Endothelial cell of umbilical vein (primary cell): ENCODE measurements at regions of chr19 and their contacts with region 1.

Region 1: DNA sequence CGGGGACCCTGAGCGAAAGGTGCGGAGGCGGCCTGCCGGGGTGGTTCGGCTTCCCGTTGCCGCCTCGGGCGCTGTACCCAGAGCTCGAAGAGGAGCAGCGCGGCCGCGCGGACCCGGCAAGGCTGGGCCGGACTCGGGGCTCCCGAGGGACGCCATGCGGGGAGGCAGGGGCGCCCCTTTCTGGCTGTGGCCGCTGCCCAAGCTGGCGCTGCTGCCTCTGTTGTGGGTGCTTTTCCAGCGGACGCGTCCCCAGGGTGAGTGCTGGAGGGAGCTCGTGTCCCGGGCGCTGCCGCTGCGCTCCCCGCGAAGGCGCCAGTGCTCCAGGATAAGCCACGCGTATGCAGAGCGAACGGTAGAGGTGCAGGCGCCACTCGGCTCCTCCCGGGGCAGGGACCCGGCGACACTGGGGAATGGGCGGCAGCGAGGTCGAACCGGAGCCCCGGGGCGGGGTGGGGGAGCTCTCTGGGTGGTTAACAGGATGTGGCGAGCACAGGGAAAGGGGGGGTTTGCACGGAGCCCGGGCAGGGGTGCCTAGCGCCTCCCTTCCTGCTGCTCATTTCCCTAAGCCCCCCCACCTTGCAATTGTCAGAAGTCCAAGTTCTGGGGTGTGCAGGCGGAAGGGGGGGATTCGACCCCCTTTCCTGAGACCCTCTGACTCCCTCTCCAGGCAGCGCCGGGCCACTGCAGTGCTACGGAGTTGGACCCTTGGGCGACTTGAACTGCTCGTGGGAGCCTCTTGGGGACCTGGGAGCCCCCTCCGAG is at the start of gene IL27RA:
- DNase-seq: peak; percentile 40
- H3K4me3 ChIP-seq: peak within 1 kb of the TSS; percentile 58 to 67 (median 61)
- H3K27ac ChIP-seq: no peak within 1 kb of the TSS
- H3K4me1 ChIP-seq: peaks cover 6% of the 10 kb centered on the region
- H3K27me3 ChIP-seq: peaks cover 0 to 7% of the 10 kb centered on the region in 2 experiments
- CTCF ChIP-seq: peak; percentile 48 to 77
- POLR2A ChIP-seq: no peak
- total RNA-seq, gene IL27RA: 3.7 and 4.5 TPM in 2 replicates

Region 2: DNA sequence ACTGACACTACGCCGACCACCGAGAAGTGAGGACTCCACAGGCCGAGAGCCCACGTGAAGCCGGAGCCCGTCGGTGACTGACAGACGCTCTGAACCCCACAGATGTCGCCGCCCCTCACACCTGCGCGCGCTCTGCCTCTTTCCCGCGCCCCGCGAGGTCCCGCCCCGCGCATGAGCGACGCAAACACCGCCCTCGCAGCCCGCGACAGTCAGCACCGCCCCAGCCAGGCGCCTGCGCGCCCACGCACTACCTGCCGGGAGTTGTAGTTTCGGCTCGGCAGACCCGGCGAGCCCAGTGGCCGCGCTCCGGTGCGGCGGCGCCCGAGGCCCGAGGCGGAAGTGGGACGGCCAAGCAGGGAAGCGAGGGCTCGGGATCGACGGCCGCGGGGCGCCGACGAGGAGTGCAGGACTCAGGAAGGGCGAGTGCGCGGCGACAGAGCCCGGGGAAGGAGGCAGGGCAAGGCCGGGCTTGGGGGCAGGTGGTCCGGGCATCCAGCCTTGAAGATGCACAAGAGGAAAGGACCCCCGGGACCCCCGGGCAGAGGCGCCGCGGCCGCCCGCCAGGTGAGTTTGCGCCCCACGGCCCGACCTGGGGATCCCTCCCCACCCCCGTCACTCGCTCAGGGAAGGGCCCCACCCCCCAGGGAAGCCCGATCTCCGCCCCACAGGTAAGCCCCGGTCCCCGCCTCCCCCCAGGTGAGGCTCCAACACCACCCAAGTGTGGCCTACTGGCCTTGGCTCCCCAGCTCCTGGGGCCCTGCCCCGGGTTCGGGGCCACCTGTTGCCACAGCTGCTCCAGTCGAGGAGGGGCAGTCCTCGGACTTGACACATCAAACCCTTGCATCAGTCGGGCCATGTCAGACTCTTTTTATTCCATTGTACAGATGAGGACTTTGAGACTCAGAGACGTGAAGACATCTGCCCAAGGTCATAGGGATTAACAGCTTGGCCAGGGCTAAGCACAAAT is 125.7 kb before region 1 on chr19 and contains the starts of genes BRME1 and CC2D1A:
- CTCF ChIA-PET with region 1: interaction called, 6 read pairs
- POLR2A ChIA-PET with region 1: no interaction called
- dilution Hi-C with region 1: no loop called
- intact Hi-C with region 1: loop called (anchors 5 kb)
- DNase-seq: peak; percentile 85
- H3K4me3 ChIP-seq: peak within 1 kb of the TSS; percentile 78 to 88 (median 85)
- H3K27ac ChIP-seq: peak within 1 kb of the TSS; percentile 45
- H3K4me1 ChIP-seq: peaks cover 7% of the 10 kb centered on the region
- H3K27me3 ChIP-seq: no peaks in the 10 kb centered on the region
- CTCF ChIP-seq: no peak
- POLR2A ChIP-seq: no peak
- total RNA-seq, gene BRME1: 1.5 and 2.5 TPM in 2 replicates
- total RNA-seq, gene CC2D1A: 29.8 and 33.7 TPM in 2 replicates

Region 3: GRCh38 chr19:13959962-13960862 is 71.7 kb before region 1 on chr19:
- CTCF ChIA-PET with region 1: interaction called, 13 read pairs
- POLR2A ChIA-PET with region 1: no interaction called
- dilution Hi-C with region 1: no loop called
- intact Hi-C with region 1: no loop called
- DNase-seq: no peak
- H3K4me3 ChIP-seq: no peak overlapping the region
- H3K27ac ChIP-seq: no peak overlapping the region
- H3K4me1 ChIP-seq: no peaks in the 10 kb centered on the region
- H3K27me3 ChIP-seq: no peaks in the 10 kb centered on the region
- CTCF ChIP-seq: peak; percentile 19 to 44
- POLR2A ChIP-seq: no peak

Region 4: DNA sequence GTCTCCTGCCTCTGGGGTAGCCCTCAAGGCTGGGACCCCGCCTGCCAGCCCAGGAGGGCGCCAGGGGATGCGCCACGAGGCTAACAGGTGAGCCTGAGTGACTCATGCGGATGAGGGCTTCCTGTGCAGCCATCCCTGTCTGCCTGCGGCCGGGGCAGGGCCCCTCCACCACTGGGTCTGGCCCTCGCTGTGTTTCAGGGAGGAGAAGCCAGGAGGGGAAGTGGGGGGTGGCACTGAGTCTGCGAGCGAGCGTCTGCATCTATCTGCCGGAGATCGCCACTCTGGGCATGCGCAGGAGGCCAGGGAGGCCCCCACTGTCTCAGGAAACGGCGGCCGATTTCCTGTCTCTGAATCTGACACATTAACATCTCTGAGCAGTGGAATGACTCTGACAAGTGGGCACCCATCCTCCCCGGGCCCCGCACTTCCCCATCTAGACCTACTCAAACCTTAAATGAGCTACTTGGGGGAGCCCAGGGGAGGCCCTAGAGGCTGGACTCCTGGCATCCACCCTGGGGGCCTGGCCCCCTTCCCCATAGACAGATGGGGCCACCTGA is 45.5 kb before region 1 on chr19:
- CTCF ChIA-PET with region 1: interaction called, 5 read pairs
- POLR2A ChIA-PET with region 1: no interaction called
- dilution Hi-C with region 1: no loop called
- intact Hi-C with region 1: loop called (anchors 2 kb)
- DNase-seq: peak; percentile 90
- H3K4me3 ChIP-seq: peak overlapping the region in 1 of 3 experiments; percentile 15
- H3K27ac ChIP-seq: peak overlapping the region; percentile 84
- H3K4me1 ChIP-seq: peaks cover 22% of the 10 kb centered on the region
- H3K27me3 ChIP-seq: no peaks in the 10 kb centered on the region
- CTCF ChIP-seq: no peak
- POLR2A ChIP-seq: peak; percentile 58

Region 5: DNA sequence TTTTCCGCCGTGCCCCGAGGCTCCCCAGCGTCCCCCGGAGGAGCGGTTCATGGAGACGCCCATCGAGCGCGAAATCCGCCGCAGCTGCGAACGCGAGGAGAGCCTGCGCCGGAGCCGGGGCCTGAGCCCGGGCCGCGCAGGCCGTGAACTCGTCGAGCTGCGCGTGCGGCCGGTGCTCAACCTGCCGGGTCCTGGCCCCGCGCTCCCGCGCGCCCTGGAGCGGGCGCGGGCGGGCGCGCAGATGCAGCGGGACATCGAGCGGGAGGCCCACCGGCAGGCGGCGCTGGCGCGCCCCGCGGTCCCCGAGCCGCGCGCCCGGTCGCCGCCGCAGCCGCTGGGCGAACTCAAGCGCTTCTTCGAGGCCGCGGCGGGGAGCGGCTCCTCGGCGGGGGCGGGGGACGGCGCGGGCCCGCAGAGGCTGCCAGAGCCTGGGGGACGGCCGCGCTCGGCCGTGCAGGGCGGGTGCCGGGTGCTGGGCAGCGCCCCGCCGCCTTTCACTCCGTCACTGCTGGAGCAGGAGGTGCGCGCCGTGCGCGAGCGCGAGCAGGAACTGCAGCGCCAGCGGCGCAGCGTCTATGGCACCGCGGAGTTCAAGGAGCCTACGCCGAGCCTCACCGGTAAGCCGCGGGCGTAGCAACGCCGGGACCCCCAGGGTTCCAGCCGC is 41.5 kb after region 1 on chr19:
- CTCF ChIA-PET with region 1: interaction called, 29 read pairs
- POLR2A ChIA-PET with region 1: no interaction called
- dilution Hi-C with region 1: no loop called
- intact Hi-C with region 1: loop called (anchors 2 kb)
- DNase-seq: peak; percentile 59
- H3K4me3 ChIP-seq: peak overlapping the region; percentile 29 to 61 (median 43)
- H3K27ac ChIP-seq: no peak overlapping the region
- H3K4me1 ChIP-seq: peaks cover 26% of the 10 kb centered on the region
- H3K27me3 ChIP-seq: no peaks in the 10 kb centered on the region
- CTCF ChIP-seq: peak; percentile 35 to 60
- POLR2A ChIP-seq: no peak